Head of caudate nucleus (tissue), 42 donors: ENCODE measurements at regions of chr18 and their contacts with region 1.

Region 1: GRCh38 chr18:72530622-72531021 is 13.5 kb downstream of the CBLN2 start:
- DNase-seq: peak in 10 of 42 donors; percentile 5 to 55 (median 22)

Region 2: GRCh38 chr18:70931942-70932814 is 1598.4 kb before region 1 on chr18:
- intact Hi-C with region 1: loop called (anchors 10 kb)
- DNase-seq: peak in 11 of 42 donors; percentile 8 to 66 (median 31)

Region 3: DNA sequence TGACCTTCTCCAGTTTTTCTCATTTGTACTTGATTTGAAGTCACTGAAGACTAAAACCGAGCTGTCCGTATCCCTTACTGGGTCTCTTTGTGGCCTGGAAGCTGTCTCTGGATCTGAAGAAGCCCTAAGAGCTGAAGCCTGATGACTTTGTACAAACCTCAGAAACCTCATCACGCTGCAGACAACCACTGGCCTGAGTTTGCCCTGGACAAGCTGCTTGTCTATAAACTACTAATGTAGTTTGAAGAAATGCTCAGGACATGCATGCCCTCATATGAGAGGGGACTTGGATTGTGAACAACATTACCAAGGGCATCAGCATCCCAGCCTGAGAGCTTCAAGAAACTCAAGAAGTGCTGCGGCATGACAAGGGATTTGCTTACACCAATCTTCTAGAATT is 92.8 kb after region 1 on chr18:
- intact Hi-C with region 1: no loop called
- DNase-seq: no peak

Region 4: GRCh38 chr18:73766910-73767515 is 1236.4 kb after region 1 on chr18:
- intact Hi-C with region 1: no loop called
- DNase-seq: no peak